H1 (cell line): ENCODE measurements at regions of chr2 and their contacts with region 1.

Region 1: GRCh38 chr2:197113275-197113711 is 186.8 kb upstream of the PGAP1 start:
- DNase-seq: no peak
- H3K4me3 ChIP-seq: no peak overlapping the region
- H3K27ac ChIP-seq: no peak overlapping the region
- H3K4me1 ChIP-seq: no peaks in the 10 kb centered on the region
- H3K27me3 ChIP-seq: no peaks in the 10 kb centered on the region
- CTCF ChIP-seq: peak in 2 of 3 experiments; percentile 29 to 35; a peak in 2 of 4 replicates
- EP300 ChIP-seq: no peak
- POLR2A ChIP-seq: no peak
- RAD21 ChIP-seq: peak; percentile 62 to 67

Region 2: GRCh38 chr2:196630531-196630930 is 482.8 kb before region 1 on chr2:
- CTCF ChIA-PET with region 1: no interaction called
- POLR2A ChIA-PET with region 1: no interaction called
- DNase-seq: no peak
- H3K4me3 ChIP-seq: no peak overlapping the region
- H3K27ac ChIP-seq: no peak overlapping the region
- H3K4me1 ChIP-seq: no peaks in the 10 kb centered on the region
- H3K27me3 ChIP-seq: no peaks in the 10 kb centered on the region
- CTCF ChIP-seq: no peak
- EP300 ChIP-seq: no peak
- POLR2A ChIP-seq: no peak
- RAD21 ChIP-seq: no peak

Region 3: DNA sequence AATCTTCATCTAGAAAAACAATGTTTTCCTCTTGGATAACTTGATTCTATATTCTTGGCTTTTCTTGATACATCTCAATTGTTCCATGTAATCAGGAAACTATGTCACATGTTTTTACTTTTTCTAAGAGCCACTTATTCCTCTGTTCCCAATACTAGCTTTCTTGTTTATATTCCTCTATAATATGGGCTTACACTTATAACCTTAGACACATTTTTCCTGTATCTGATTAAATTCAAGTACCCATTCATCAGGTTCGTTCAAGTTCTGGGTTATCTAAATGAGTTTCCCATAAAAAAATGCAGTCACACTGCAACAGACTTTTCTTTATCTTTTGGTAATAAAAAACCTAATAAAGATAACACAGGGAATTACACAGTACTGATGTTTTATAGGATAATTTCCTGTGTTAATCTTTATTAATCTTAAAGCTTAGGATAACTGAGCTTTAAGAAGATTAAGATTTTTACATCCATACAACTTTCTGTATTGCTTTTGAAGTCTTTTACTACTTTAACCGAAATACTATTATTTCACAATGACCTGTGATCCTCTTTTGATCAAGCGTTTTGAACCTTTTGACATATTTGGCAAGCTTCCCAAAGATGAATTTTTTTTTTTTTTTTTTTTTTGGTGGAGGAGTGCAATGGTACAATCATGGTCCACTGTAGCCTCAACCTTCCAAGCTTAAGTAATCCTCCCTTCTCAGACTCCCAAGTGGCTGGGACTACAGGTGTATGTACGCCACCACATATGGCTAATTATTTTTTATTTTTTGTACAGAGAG is 259.8 kb before region 1 on chr2:
- CTCF ChIA-PET with region 1: no interaction called
- POLR2A ChIA-PET with region 1: no interaction called
- DNase-seq: no peak
- H3K4me3 ChIP-seq: no peak overlapping the region
- H3K27ac ChIP-seq: no peak overlapping the region
- H3K4me1 ChIP-seq: no peaks in the 10 kb centered on the region
- H3K27me3 ChIP-seq: no peaks in the 10 kb centered on the region
- CTCF ChIP-seq: no peak
- EP300 ChIP-seq: no peak
- POLR2A ChIP-seq: no peak
- RAD21 ChIP-seq: no peak

Region 4: DNA sequence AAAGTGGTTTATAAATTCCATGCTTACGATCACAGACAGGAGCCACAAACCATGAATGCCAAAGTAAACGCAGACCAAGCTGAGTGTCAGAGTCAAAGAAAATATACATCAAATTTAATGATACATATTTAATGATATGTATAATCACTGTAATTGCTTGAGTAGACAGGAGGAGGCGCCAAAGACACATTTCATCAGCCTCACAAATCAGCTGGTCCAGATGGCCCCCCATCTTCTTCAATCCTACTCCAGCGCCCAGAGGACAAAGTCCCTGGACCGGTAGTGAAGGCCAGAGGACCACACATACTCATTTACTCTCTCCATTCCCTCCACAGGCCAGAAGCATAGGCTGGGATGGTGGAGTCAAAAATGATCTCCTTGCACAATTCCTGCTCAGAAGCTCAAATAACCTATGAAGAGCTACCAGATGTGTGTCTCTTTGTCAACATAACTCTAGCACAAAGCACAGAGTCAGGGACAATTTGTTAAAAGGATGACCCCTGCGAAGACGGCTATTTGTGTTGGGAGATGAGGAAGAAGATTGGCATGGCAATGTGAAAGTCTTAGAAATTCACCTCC is 37.4 kb before region 1 on chr2:
- CTCF ChIA-PET with region 1: interaction called, 10 read pairs
- POLR2A ChIA-PET with region 1: no interaction called
- DNase-seq: no peak
- H3K4me3 ChIP-seq: no peak overlapping the region
- H3K27ac ChIP-seq: no peak overlapping the region
- H3K4me1 ChIP-seq: no peaks in the 10 kb centered on the region; a peak in 1 of 7 replicates
- H3K27me3 ChIP-seq: no peaks in the 10 kb centered on the region
- CTCF ChIP-seq: peak; percentile 20 to 54 (median 52)
- EP300 ChIP-seq: no peak
- POLR2A ChIP-seq: no peak
- RAD21 ChIP-seq: peak; percentile 74 to 80

Region 5: GRCh38 chr2:197124639-197125390 is 11.5 kb after region 1 on chr2:
- CTCF ChIA-PET with region 1: interaction called, 38 read pairs
- POLR2A ChIA-PET with region 1: no interaction called
- DNase-seq: no peak
- H3K4me3 ChIP-seq: no peak overlapping the region
- H3K27ac ChIP-seq: no peak overlapping the region
- H3K4me1 ChIP-seq: no peaks in the 10 kb centered on the region
- H3K27me3 ChIP-seq: no peaks in the 10 kb centered on the region
- CTCF ChIP-seq: no peak
- EP300 ChIP-seq: no peak
- POLR2A ChIP-seq: no peak
- RAD21 ChIP-seq: no peak

Region 6: DNA sequence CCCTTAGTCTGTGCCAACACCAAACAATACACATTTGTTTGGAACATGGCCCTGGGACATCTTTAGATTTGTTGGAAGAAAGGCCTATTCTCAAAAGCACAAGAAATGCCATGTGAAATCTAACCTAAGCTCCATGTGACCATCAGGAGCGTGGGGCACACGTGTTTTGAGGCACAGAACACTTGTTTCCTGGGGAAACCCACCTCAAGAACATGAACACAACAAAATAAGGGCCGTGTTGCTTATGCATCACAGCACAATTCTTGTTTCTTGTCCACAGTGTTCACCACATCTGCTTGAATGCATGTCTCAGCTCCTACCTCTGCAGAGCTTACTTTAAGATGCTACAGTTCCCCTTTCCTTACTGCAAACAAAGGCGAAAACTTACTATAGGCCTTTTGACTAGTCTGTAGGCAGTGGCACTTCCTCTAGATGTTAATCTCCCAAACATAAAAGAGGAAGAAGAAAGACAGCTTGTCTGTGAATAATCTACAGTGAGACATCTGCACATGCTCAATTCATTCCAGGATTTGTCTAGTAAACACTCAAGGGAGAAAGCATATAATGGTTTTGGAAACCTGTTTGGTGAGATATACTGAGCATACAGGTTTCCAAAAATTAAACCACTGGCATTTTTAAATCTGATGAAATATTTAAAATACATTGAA is 32.3 kb after region 1 on chr2:
- CTCF ChIA-PET with region 1: interaction called, 12 read pairs
- POLR2A ChIA-PET with region 1: no interaction called
- DNase-seq: no peak
- H3K4me3 ChIP-seq: no peak overlapping the region
- H3K27ac ChIP-seq: no peak overlapping the region
- H3K4me1 ChIP-seq: no peaks in the 10 kb centered on the region
- H3K27me3 ChIP-seq: peaks cover 0 to 2% (median 0%) of the 10 kb centered on the region in 4 experiments; a peak in 1 of 7 replicates
- CTCF ChIP-seq: no peak
- EP300 ChIP-seq: no peak
- POLR2A ChIP-seq: no peak
- RAD21 ChIP-seq: no peak

Region 7: DNA sequence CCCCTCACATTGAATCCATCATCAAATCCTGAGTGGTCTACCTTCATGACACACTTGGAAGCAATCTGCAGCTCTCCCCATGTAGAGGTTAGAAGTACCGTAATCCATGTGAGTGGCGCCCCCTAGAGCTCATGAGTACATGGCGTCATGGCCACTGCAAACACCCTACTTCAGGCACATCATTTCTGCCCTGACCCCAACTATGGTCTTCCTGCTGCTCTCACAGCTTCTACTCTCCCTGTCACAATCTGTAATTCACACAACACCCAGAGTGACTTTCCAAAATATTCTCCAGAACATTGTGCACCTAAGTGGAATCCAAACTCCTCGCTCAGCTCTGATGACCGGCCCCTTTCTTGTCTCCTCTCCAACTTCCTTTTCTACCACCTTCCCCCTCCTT is 55.4 kb after region 1 on chr2:
- CTCF ChIA-PET with region 1: interaction called, 110 read pairs
- POLR2A ChIA-PET with region 1: interaction called, 7 read pairs
- DNase-seq: peak in 1 of 2 experiments; percentile 87
- H3K4me3 ChIP-seq: no peak overlapping the region
- H3K27ac ChIP-seq: no peak overlapping the region
- H3K4me1 ChIP-seq: peaks cover 3 to 10% (median 8%) of the 10 kb centered on the region in 4 experiments; a peak in 4 of 7 replicates
- H3K27me3 ChIP-seq: 0 out of 7 replicates have a peak, but pooled peaks cover 0 to 4% (median 0%) of the 10 kb centered on the region in 4 experiments
- CTCF ChIP-seq: peak; percentile 84 to 96 (median 96)
- EP300 ChIP-seq: no peak
- POLR2A ChIP-seq: no peak
- RAD21 ChIP-seq: peak; percentile 90 to 92

Region 8: DNA sequence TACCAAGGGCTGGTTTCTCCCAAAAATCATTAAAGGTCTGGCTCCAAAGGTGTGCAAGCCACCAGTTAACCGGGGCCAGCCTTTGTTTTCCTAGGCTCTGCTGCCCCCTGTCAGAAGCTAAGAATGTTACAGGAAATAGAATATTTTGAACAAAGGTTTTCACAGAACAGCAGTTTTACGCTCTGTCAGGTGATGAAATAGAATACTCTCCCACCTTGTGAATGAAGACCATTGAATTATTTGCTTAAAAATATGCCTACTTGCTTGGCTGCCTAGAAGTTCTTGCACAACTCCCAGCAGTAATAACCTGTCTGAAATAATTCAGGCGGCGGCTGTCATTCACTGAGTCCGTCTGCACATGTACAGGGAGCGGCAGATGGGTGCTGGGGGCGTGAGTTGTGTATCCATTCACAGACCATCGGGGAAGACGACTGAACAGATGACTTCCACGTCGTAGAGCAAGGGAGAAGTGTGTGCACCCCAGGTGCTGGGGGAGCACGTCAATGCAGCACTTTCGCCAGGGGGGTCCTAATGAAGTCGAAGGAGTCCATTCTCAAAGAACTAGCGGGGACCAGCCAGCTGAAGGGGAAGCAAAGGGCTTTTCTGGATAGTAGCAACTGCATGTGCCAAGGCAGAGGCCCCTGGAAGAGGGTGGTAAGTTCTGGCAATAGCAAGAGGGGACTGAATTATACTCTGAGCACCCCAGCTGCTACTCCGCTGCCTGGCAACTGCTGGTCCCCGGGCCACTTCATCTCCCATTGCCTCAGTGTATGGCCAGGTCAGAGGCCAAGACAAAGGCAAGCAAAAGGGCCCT is 265.4 kb after region 1 on chr2:
- CTCF ChIA-PET with region 1: interaction called, 13 read pairs
- POLR2A ChIA-PET with region 1: no interaction called
- DNase-seq: peak in 1 of 2 experiments; percentile 70
- H3K4me3 ChIP-seq: no peak overlapping the region
- H3K27ac ChIP-seq: no peak overlapping the region
- H3K4me1 ChIP-seq: no peaks in the 10 kb centered on the region
- H3K27me3 ChIP-seq: no peaks in the 10 kb centered on the region
- CTCF ChIP-seq: peak; percentile 36 to 86 (median 75)
- EP300 ChIP-seq: no peak
- POLR2A ChIP-seq: no peak
- RAD21 ChIP-seq: peak; percentile 97